Body of pancreas (tissue), 4 donors: ENCODE measurements at regions of chr19 and their contacts with region 1.

Region 1: DNA sequence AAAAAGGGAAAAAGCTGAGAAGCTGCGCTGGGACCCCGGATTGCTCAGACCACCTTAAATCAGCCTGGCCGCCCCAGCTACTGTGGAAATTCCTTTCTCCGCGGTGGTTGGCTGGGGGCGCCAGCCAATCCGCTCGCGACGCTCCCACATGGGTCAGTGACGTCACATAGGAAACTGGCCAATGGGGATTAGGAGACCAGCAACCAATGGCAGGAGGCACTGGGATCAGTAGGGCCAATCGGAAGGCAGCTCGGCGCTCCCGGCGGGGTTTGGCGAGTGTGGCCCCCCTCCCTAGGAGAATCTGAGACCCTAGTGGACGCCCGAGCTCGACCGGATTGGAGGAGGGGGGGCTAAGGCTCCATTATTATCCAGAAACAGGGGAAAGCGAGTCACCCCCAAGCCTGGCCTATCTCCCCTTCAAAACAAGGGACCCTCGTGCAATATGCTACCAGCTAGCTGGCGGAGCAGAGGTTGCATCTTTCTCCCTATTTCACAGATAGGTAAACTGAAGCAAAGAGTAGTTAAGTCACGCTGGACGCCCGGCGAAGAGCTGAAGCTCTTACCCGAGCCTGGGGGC is 6.5 kb upstream of the TLE2 start:
- DNase-seq: peak; percentile 98 to 100 (median 99)
- ATAC-seq: peak; percentile 90
- H3K4me3 ChIP-seq: peak overlapping the region in 1 of 2 donors; percentile 13
- H3K27ac ChIP-seq: peak overlapping the region; percentile 88 to 94 (median 90)
- H3K4me1 ChIP-seq: peaks cover 33% of the 10 kb centered on the region
- H3K27me3 ChIP-seq: no peaks in the 10 kb centered on the region
- CTCF ChIP-seq: peak in 3 of 7 experiments; percentile 17 to 20 (median 20)
- POLR2A ChIP-seq: peak in 2 of 3 donors; percentile 43 to 45

Region 2: DNA sequence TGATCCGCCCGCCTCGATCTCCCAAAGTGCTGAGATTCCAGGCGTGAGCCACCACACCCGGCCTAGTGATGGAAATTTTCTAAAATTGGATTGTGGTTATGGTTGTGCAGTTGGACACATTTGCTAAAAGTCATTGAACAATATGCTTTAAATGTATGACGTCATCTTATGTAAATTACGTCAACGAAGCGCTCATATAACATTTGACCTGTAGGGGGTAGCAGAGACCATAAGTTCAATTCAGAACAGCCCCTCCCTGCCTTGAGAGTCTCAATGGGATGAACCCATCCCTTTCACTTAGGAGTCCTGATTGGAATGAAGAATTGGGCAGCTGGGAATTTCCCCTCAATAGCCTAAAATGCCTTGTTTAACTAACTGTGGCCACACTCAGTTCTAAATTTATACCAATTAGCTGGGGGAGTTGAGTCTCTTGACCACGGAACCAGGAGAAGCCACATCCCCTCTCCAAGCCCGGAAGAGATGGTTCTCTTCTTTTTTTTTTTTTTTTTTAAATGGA is 73.5 kb before region 1 on chr19:
- intact Hi-C with region 1: loop called (anchors 10 kb)
- DNase-seq: peak; percentile 58 to 84 (median 70)
- ATAC-seq: peak; percentile 92
- H3K4me3 ChIP-seq: no peak overlapping the region
- H3K27ac ChIP-seq: peak overlapping the region in 1 of 4 donors; percentile 15
- H3K4me1 ChIP-seq: peaks cover 7% of the 10 kb centered on the region
- H3K27me3 ChIP-seq: no peaks in the 10 kb centered on the region
- CTCF ChIP-seq: peak; percentile 37 to 98 (median 95)
- POLR2A ChIP-seq: no peak

Region 3: GRCh38 chr19:3302755-3303154 is 267.1 kb after region 1 on chr19:
- intact Hi-C with region 1: no loop called
- DNase-seq: no peak
- ATAC-seq: no peak
- H3K4me3 ChIP-seq: no peak overlapping the region
- H3K27ac ChIP-seq: no peak overlapping the region
- H3K4me1 ChIP-seq: peaks cover 10% of the 10 kb centered on the region
- H3K27me3 ChIP-seq: no peaks in the 10 kb centered on the region
- CTCF ChIP-seq: no peak
- POLR2A ChIP-seq: no peak